ENCODE measurements at regions of chrX and their contacts with region 1.

Region 1: DNA sequence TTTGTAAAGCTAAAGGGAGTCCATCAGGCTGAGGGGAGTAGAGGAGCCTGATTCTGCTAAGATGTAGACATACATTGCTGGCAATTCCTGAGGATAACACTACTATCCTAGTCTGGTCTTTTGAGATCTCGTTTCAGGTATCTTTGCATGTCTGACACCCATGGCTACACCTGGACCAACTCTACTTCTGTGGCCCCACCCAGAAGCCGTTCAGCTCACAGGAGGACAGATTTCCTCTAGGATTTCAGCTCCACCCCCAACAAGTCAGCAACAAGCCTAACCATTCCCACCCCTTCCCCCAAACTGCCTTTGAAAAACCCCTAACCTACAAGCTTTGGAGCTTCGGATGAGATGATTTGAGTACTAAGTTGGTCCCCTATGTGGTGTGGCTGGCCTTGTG is 848.2 kb downstream of the NLGN4X start:
- DNase-seq: no peak
- H3K4me3 ChIP-seq: no peak overlapping the region
- H3K27ac ChIP-seq: no peak overlapping the region
- H3K4me1 ChIP-seq: no peaks in the 10 kb centered on the region
- H3K27me3 ChIP-seq: no peaks in the 10 kb centered on the region
- CTCF ChIP-seq: no peak
- EP300 ChIP-seq: no peak
- POLR2A ChIP-seq: no peak

Region 2: GRCh38 chrX:5431823-5432222 is 51.4 kb after region 1 on chrX:
- in situ Hi-C with region 1: no loop called
- intact Hi-C with region 1: loop called (anchors 2 kb)
- DNase-seq: no peak
- H3K4me3 ChIP-seq: no peak overlapping the region
- H3K27ac ChIP-seq: no peak overlapping the region
- H3K4me1 ChIP-seq: no peaks in the 10 kb centered on the region
- H3K27me3 ChIP-seq: no peaks in the 10 kb centered on the region
- CTCF ChIP-seq: no peak
- EP300 ChIP-seq: no peak
- POLR2A ChIP-seq: no peak

Measured in transverse colon (tissue), 4 donors.